Sciatic nerve (tissue), 2 donors: ENCODE measurements at regions of chr1 and their contacts with region 1.

Region 1: GRCh38 chr1:30379684-30380624 is 343.4 kb downstream of the MATN1 start:
- DNase-seq: peak; percentile 63
- ATAC-seq: peak; percentile 84

Region 2: GRCh38 chr1:29230553-29231378 is 1149.2 kb before region 1 on chr1 and contains the start of gene MECR:
- intact Hi-C with region 1: loop called (anchors 10 kb)
- DNase-seq: peak; percentile 96
- ATAC-seq: peak; percentile 99
- total RNA-seq, gene MECR: 22.6 TPM

Region 3: GRCh38 chr1:30422251-30422650 is 42.3 kb after region 1 on chr1:
- intact Hi-C with region 1: no loop called
- DNase-seq: no peak
- ATAC-seq: no peak

Region 4: DNA sequence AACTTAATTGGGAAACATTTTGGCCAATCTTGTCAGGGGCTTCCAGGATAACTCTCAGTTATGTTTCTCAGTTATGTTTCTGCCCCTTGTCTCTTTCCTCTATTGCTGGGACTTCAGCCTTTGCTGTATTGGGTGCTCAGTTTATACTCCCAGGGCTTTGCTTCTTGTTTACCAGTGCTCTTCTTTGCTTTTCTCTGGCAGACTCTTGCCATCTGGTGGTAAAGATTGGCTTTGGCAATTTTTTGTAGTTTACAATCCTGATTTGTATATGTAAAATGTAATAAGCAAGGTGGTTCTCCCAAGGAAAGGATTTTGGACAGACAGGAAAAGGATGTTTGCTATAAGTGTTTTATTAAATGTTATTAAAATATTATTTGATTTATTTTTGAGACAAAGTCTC is 955.1 kb after region 1 on chr1:
- intact Hi-C with region 1: loop called (anchors 10 kb)
- DNase-seq: no peak
- ATAC-seq: no peak